ENCODE measurements at regions of chr3 and their contacts with region 1.

Region 1: DNA sequence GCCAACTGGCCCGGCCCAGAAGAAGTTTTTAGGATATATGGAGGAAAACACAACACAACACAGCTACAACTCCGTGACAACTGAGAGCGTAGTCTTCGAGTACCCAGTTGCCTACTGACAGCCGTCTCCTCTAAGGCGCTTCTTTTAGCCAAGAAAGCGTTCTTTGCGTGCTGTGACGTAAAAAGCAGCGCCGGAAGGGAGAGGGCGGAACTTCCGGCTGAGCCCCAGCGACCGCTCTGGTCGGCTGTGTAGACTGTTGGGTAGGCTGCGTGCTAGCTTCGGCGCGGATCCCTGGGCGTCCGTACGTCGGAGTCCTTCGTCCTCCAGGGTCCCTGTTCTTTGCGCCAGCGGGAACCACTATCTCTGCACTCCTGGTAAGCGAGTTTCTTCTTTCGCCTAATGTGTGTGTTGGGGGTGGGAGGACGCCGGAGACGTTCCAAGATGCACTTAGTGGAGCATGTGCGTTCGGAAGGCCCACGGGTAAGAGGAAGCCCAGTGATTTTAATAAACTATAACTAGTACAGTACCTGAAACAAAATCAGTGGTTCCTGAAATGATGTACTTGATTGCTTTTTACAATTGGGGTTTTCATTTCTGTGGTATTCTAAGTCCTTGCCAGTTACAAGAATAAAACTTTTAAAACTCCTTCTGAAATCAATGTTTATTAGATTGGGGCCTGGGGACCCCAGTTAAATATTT is at the start of gene TRMT10C:
- DNase-seq: peak; percentile 96
- ATAC-seq: peak; percentile 98
- H3K4me3 Mint-ChIP-seq: peak within 1 kb of the TSS; percentile 98
- H3K27ac Mint-ChIP-seq: peak within 1 kb of the TSS; percentile 98
- H3K4me1 Mint-ChIP-seq: peaks cover 30% of the 10 kb centered on the region
- H3K27me3 Mint-ChIP-seq: peaks cover under 1% of the 10 kb centered on the region
- total RNA-seq, gene TRMT10C: 25.0 to 26.8 TPM

Region 2: GRCh38 chr3:101512646-101513418 is 48.9 kb before region 1 on chr3 and contains the start of gene SENP7:
- CTCF ChIA-PET with region 1: interaction called, 5 read pairs
- POLR2A ChIA-PET with region 1: interaction called, 41 read pairs
- DNase-seq: peak; percentile 84
- ATAC-seq: peak; percentile 75
- H3K4me3 Mint-ChIP-seq: peak within 1 kb of the TSS; percentile 97
- H3K27ac Mint-ChIP-seq: peak within 1 kb of the TSS; percentile 97
- H3K4me1 Mint-ChIP-seq: peaks cover 34% of the 10 kb centered on the region
- H3K27me3 Mint-ChIP-seq: no peaks in the 10 kb centered on the region
- total RNA-seq, gene SENP7: 20.6 to 20.9 TPM

Region 3: GRCh38 chr3:101518421-101518871 is 43.3 kb before region 1 on chr3:
- CTCF ChIA-PET with region 1: interaction called, 5 read pairs
- POLR2A ChIA-PET with region 1: interaction called, 41 read pairs
- DNase-seq: peak; percentile 65
- ATAC-seq: peak; percentile 93
- H3K4me3 Mint-ChIP-seq: peak overlapping the region; percentile 4
- H3K27ac Mint-ChIP-seq: peak overlapping the region; percentile 80
- H3K4me1 Mint-ChIP-seq: peaks cover 56% of the 10 kb centered on the region
- H3K27me3 Mint-ChIP-seq: no peaks in the 10 kb centered on the region

Region 4: DNA sequence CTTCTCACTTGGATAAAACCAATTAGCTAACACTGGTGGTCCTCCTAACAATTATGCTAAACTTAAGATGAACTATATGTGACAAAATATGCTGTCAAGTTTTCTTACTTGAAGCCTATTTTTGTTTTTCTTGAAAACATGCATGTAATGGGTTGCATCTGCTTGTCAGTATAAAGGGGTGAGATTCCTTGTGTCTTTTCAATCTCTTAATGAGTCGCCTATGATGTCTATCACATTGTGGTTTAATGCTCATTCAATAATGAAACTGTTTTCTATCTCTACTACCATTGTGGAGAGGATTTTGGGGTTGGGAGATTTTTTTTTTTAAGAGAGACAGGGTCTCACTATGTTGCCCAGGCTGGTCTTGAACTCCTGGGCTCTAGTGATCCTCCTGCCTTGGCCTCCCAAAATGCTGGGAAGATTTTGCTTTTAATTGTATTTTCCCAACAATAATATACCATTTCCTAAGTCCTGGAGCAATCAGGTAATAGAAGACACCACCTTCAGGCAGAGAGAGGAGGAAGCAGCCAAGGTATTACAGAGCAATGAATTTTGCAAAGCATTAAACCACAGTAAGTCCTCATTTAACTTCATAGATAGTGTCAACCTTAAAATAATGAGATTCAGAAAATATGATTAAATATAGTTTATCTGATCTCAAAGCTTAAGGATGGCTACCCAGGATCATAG is 17.5 kb before region 1 on chr3:
- CTCF ChIA-PET with region 1: interaction called, 4 read pairs
- POLR2A ChIA-PET with region 1: interaction called, 14 read pairs
- DNase-seq: no peak
- ATAC-seq: no peak
- H3K4me3 Mint-ChIP-seq: no peak overlapping the region
- H3K27ac Mint-ChIP-seq: peak overlapping the region; percentile 47
- H3K4me1 Mint-ChIP-seq: peaks cover 26% of the 10 kb centered on the region
- H3K27me3 Mint-ChIP-seq: no peaks in the 10 kb centered on the region

Measured in activated CD8-positive, alpha-beta T cell treated with anti-CD3 and anti-CD28 coated beads, Interleukin-2, amount 10 ng/mL, durations not matched to agents 7 days and 5 days (primary cell).